Heart right ventricle (tissue), 16 donors: ENCODE measurements at regions of chr3 and their contacts with region 1.

Region 1: DNA sequence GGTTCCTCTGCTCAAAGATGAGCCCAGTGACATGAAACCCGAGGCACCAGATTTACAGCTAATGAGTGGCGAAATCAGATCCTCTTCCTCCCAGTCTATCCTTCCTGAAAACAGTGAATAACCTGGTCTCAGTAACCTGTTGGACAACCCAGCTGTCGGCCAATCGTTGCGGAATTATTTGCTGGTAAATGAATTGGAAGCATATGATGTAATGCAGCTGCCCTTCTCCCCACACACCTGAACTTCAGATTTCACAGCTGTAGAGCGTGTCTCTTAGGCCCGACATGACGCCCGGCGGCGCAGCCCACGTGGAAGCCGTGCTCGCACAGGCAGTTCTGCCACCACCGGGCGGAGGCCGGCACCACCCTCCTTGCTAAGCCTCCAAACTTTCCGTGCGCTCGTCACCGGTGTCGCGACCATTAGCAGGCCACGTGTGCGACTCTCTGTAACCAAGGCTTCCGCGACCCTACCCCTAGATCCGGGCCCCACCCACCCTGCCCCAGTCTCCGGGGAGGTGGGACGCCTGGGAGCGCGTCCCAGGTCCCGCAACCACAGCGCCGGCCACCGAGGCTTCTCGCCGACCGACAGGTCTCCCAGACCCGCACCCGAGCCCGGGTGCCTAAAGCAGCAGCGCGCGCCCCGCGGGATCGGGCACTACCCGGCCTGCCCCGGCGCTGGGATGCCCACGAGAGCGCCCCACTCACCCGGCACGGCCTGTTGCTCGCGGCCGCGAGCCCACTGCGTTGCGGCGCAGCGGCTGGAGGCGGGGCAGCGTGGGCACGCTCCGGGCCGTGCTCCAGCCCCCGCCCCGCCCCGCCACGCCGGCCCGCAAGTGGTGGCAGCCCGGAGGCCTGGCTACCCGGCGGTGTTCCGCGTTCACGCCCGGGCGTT is at the start of gene RIOX2:
- DNase-seq: peak; percentile 57 to 81
- ATAC-seq: peak; percentile 91 to 99 (median 95)
- H3K4me3 ChIP-seq: peak within 1 kb of the TSS; percentile 63 to 83 (median 76)
- H3K27ac ChIP-seq: peak within 1 kb of the TSS in 9 of 10 donors; percentile 73 to 88 (median 81)
- H3K4me1 ChIP-seq: peaks cover 0 to 33% (median 12%) of the 10 kb centered on the region in 9 donors
- H3K27me3 ChIP-seq: no peaks in the 10 kb centered on the region
- CTCF ChIP-seq: peak in 4 of 9 donors; percentile 25 to 36 (median 32)
- total RNA-seq, gene RIOX2: 9.1 to 15.8 (median 12.8) TPM

Region 2: GRCh38 chr3:97815149-97815917 is 156.6 kb before region 1 on chr3:
- intact Hi-C with region 1: loop called in 3 of 10 experiments (anchors 5 to 10 kb)
- DNase-seq: no peak
- ATAC-seq: no peak
- H3K4me3 ChIP-seq: no peak overlapping the region
- H3K27ac ChIP-seq: no peak overlapping the region
- H3K4me1 ChIP-seq: no peaks in the 10 kb centered on the region
- H3K27me3 ChIP-seq: peaks cover 0 to 2% (median 0%) of the 10 kb centered on the region in 7 donors
- CTCF ChIP-seq: no peak